ENCODE measurements at regions of chr1 and their contacts with region 1.

Region 1: DNA sequence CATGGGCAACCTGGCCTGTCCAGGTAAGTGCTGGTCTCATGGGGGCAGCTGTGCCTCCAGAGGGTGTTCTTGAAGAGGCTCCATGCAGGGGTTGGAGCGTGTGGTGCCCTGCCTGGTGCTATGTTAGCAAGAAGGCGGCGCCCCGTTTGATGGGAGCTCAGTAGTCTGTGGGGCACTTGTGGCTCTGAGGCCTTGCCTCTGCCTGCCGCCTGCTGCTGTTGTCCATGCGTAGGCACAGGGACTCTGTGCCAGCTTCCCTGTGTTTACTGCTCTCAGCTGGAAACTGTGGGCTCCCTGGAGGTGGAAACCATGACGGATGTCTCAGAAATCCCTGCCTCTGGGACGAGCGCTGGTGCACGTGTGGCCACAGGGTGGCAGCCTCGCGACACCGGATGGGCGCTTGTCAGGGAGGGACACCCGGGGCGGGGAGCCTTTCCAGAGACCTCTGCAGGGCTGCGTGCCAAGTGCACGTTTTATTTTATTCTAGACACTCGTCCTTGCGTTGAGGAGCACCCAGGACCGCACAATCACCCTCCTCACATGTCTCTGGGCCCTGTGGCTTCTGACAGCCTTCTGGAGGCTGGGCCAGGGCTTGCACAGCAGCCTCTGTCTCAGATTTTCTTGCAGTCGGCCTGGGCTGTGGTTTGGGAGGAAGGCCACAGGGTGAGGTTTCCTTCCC is 27.1 kb downstream of the SNAP47 start:
- DNase-seq: peak; percentile 88
- H3K4me3 Mint-ChIP-seq: peak overlapping the region; percentile 30
- H3K27ac Mint-ChIP-seq: peak overlapping the region; percentile 52
- H3K4me1 Mint-ChIP-seq: peaks cover 80% of the 10 kb centered on the region
- H3K27me3 Mint-ChIP-seq: no peaks in the 10 kb centered on the region

Region 2: DNA sequence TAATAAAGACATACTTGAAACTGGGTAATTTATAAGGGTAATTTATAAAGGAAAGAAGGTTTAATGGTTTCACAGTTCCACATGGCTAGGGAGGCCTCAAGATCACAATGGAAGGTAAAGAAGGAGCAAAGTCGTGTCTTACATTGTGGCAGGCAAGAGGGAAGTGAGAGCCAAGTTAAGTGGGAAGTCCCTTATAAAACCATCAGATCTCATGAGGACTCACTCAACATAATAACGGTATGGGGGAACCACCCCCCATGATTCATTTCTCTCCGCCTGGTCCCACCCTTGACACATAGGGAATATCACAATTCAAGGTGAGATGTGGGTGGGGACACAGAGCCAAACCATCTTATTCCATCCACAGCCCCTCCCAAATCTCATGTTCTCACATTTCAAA is 275.8 kb before region 1 on chr1:
- intact Hi-C with region 1: loop called (anchors 2 kb)
- DNase-seq: no peak
- H3K4me3 Mint-ChIP-seq: no peak overlapping the region
- H3K27ac Mint-ChIP-seq: no peak overlapping the region
- H3K4me1 Mint-ChIP-seq: no peaks in the 10 kb centered on the region
- H3K27me3 Mint-ChIP-seq: peaks cover 10% of the 10 kb centered on the region

Region 3: DNA sequence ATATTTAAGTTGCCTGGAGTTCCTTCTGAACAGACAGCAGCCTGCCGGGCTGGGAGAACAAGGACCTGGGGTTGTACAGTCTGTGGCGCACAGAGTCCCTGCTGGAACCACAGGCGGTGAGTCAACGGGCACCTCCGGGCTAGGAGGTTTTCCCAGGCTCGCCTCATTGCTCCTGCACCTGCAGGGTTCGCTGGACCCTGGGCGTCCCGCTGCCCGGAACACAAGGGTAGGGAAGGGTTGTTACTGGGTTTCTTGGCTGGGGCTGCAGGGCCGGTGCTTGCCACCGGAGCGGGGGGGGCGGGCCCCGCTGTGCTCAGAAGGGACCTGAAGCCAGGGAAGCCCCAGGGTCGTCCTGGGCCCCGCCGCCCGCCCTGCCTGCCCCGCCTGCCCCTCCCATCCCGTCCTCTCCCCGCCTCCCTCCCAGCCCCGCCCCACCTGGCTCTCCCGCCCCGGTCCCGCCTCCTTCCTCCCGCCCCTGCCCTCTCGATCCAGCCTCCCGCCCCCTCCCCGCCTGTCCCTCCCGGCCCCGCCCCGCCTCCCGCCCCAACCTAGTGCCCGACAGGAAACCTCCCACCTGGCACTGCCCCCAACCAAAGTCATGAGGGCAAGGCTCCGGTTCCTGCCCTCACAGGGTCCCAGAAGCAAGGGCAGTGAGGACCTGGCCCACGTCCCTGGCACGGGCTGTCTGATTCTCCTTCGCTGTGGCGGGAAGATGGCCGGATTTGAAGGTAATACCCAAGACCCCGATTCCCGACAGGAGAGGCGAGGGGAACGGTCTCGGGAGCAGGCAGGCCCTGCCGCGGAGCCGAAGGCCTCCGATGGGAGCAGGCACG is 34.1 kb before region 1 on chr1:
- intact Hi-C with region 1: loop called (anchors 1 kb)
- DNase-seq: peak; percentile 39
- H3K4me3 Mint-ChIP-seq: peak overlapping the region; percentile 82
- H3K27ac Mint-ChIP-seq: peak overlapping the region; percentile 9
- H3K4me1 Mint-ChIP-seq: peaks cover 6% of the 10 kb centered on the region
- H3K27me3 Mint-ChIP-seq: no peaks in the 10 kb centered on the region

Region 4: GRCh38 chr1:227734856-227735538 is 27.4 kb before region 1 on chr1 and contains the starts of genes JMJD4 and SNAP47:
- intact Hi-C with region 1: loop called (anchors 1 kb)
- DNase-seq: peak; percentile 92
- H3K4me3 Mint-ChIP-seq: peak within 1 kb of the TSS; percentile 96
- H3K27ac Mint-ChIP-seq: peak within 1 kb of the TSS; percentile 93
- H3K4me1 Mint-ChIP-seq: peaks cover 23% of the 10 kb centered on the region
- H3K27me3 Mint-ChIP-seq: no peaks in the 10 kb centered on the region
- total RNA-seq, gene JMJD4: 26.6 and 27.5 TPM in 2 replicates
- total RNA-seq, gene SNAP47: 28.4 and 29.3 TPM in 2 replicates

Region 5: GRCh38 chr1:227776331-227776771 is 14.0 kb after region 1 on chr1:
- intact Hi-C with region 1: no loop called
- DNase-seq: no peak
- H3K4me3 Mint-ChIP-seq: no peak overlapping the region
- H3K27ac Mint-ChIP-seq: no peak overlapping the region
- H3K4me1 Mint-ChIP-seq: peaks cover 17% of the 10 kb centered on the region
- H3K27me3 Mint-ChIP-seq: no peaks in the 10 kb centered on the region

Region 6: GRCh38 chr1:227787513-227788270 is 25.3 kb after region 1 on chr1:
- intact Hi-C with region 1: loop called (anchors 1 kb)
- DNase-seq: peak; percentile 89
- H3K4me3 Mint-ChIP-seq: peak overlapping the region; percentile 71
- H3K27ac Mint-ChIP-seq: no peak overlapping the region
- H3K4me1 Mint-ChIP-seq: peaks cover 5% of the 10 kb centered on the region
- H3K27me3 Mint-ChIP-seq: peaks cover 2% of the 10 kb centered on the region

Region 7: DNA sequence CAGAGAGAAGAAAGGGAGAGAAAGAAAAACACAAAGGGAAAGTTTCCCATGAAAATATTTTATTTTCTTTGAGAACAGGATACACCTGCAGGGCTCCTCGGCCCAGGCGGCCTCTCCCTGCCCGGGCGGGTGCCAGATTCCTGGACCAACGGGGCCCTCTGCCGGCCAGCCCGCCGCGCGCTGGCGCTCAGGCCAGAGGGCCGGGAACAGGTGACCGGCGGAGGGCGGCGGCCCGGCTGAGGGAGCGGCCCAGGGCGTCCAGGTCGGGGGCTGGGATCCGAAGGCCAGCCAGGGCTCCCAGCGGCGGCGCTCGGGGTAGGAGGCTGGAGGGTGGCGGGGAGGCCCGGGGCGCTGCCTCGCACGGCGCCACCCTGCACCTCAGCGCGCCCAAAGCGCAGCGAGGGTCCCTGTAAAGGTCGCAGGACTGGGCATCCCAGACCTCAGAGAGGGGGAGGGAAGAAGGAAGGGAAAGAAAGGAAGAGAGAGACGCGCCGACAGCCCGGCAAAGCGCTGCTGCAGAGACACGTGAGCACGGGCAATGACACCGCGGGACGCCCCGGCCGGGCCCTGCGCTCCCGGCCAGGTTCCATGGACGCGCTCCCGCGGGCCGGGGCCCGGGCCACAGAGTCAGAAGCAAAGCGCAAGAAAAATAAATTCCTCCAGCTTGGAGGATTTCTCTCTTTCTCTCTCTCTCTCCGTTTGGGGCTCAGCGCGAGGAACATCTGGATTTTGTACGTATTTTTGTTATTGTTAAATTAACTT is 184.4 kb after region 1 on chr1:
- intact Hi-C with region 1: loop called (anchors 1 kb)
- DNase-seq: no peak
- H3K4me3 Mint-ChIP-seq: peak overlapping the region; percentile 60
- H3K27ac Mint-ChIP-seq: no peak overlapping the region
- H3K4me1 Mint-ChIP-seq: peaks cover 3% of the 10 kb centered on the region
- H3K27me3 Mint-ChIP-seq: peaks cover 27% of the 10 kb centered on the region

Region 8: GRCh38 chr1:228082135-228082891 is 319.9 kb after region 1 on chr1 and contains the start of gene ARF1:
- intact Hi-C with region 1: loop called (anchors 10 kb)
- DNase-seq: peak; percentile 89
- H3K4me3 Mint-ChIP-seq: peak within 1 kb of the TSS; percentile 89
- H3K27ac Mint-ChIP-seq: peak within 1 kb of the TSS; percentile 92
- H3K4me1 Mint-ChIP-seq: peaks cover 42% of the 10 kb centered on the region
- H3K27me3 Mint-ChIP-seq: no peaks in the 10 kb centered on the region
- total RNA-seq, gene ARF1: 409 and 410 TPM in 2 replicates

Measured in activated T-helper 2 cell treated with anti-CD3 and anti-CD28 coated beads, Interferon-gamma antibody, Interleukin-2, Interleukin-4, amounts not matched to agents 10 μg/mL and 5 μg/mL and 100 μg/mL, durations not matched to agents 14 hours and 24 hours and 36 hours (primary cell).